Activated B cell treated with CpG ODN at 0.5 μM for 24 hours (primary cell): ENCODE measurements at regions of chr2 and their contacts with region 1.

Region 1: DNA sequence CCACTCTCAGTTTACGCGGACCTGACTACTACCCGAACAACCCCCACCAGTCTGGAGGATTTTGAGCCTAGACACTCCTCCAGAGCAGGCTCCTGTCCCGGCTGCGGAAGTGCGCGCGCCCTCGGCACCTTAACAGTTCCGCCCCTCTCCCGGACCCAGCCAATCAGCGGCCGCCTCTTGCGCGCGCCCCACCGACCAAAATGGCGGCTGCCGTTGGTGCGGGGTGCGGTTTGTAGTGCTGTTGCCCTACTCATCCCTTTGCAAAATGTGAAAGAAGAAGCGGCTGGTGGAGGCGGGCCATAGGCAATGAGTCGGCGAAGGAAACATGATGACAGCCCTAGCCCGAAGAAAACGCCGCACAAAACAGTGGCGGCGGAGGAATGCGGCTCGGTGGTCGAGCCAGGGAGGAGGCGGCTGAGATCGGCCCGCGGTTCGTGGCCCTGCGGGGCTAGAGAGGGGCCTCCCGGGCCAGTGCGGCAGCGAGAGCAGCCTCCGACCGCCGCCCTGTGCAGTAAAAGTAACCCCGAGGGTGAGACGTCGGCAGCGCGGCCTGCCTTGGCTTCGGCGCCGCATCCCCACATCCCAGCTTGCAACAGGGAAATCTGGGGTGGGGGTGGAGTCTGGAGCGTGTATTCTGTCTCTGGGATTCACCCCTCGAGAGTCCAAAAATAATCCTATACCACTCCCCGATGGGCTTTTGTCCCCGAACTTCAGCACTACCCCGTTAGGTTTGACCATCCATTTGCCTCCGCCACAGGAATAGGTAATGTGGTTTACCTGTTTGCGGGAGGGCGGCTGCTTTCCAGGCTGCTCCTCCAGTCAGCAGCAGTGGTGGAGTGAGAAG is at the start of gene ETAA1:
- DNase-seq: peak; percentile 89
- ATAC-seq: peak; percentile 99
- H3K4me3 Mint-ChIP-seq: peak within 1 kb of the TSS; percentile 99
- H3K27ac Mint-ChIP-seq: peak within 1 kb of the TSS; percentile 98
- H3K4me1 Mint-ChIP-seq: peaks cover 11% of the 10 kb centered on the region
- H3K27me3 Mint-ChIP-seq: no peaks in the 10 kb centered on the region
- CTCF ChIP-seq: no peak
- total RNA-seq, gene ETAA1: 11.7 and 12.6 TPM in 2 replicates

Region 2: GRCh38 chr2:67825476-67825875 is 428.1 kb after region 1 on chr2:
- CTCF ChIA-PET with region 1: no interaction called
- POLR2A ChIA-PET with region 1: no interaction called
- intact Hi-C with region 1: loop called (anchors 10 kb)
- DNase-seq: no peak
- ATAC-seq: peak; percentile 86
- H3K4me3 Mint-ChIP-seq: peak overlapping the region; percentile 37
- H3K27ac Mint-ChIP-seq: no peak overlapping the region
- H3K4me1 Mint-ChIP-seq: peaks cover 23% of the 10 kb centered on the region
- H3K27me3 Mint-ChIP-seq: no peaks in the 10 kb centered on the region
- CTCF ChIP-seq: no peak

Region 3: DNA sequence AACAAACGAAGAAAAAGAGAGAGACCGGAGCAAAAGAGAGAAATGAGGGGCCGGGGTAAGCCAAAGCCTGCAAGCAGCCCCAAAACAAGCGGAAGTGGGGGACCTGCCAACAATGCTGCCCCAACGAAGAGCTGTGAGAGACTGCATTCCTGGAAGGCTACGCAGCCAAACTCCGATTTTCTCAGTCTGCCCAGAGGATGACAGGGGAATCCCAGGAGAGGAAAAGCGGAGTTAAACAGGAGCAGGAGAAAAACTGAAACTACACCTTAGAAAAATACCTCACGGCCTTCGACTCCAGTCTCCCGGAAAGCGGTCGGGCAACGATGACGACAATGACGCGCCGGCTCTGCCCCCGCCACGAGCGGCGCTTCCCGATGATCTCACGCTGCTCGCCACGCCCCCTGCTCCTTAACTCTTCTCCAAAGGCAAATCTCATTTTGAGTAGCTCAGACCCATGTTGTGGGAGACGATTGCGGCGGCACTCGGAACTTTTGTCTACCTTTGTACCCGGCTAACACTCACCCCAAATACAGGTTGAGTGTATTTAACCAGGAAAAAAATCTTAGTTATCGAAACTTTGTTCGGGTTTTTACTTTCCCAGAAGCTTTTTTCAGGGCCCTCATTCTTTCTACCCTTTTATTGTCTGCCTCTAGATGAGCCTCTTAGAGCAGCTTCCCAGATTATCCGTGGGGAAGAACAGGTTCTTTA is 665.5 kb after region 1 on chr2 and contains the start of gene C1D:
- CTCF ChIA-PET with region 1: no interaction called
- POLR2A ChIA-PET with region 1: no interaction called
- intact Hi-C with region 1: loop called (anchors 5 kb)
- DNase-seq: peak; percentile 94
- ATAC-seq: peak; percentile 92
- H3K4me3 Mint-ChIP-seq: peak within 1 kb of the TSS; percentile 93
- H3K27ac Mint-ChIP-seq: peak within 1 kb of the TSS; percentile 95
- H3K4me1 Mint-ChIP-seq: peaks cover 41% of the 10 kb centered on the region
- H3K27me3 Mint-ChIP-seq: peaks cover 2% of the 10 kb centered on the region
- CTCF ChIP-seq: no peak
- total RNA-seq, gene C1D: 21.5 and 25.2 TPM in 2 replicates